ENCODE measurements at regions of chr10 and their contacts with region 1.

Region 1: GRCh38 chr10:95693668-95694534 is at the start of gene TCTN3:
- DNase-seq: peak; percentile 96 to 98
- ATAC-seq: peak; percentile 99
- total RNA-seq, gene TCTN3: 26.6 to 29.6 TPM

Region 2: GRCh38 chr10:95618126-95618525 is 75.8 kb before region 1 on chr10:
- intact Hi-C with region 1: no loop called
- DNase-seq: no peak
- ATAC-seq: no peak

Region 3: DNA sequence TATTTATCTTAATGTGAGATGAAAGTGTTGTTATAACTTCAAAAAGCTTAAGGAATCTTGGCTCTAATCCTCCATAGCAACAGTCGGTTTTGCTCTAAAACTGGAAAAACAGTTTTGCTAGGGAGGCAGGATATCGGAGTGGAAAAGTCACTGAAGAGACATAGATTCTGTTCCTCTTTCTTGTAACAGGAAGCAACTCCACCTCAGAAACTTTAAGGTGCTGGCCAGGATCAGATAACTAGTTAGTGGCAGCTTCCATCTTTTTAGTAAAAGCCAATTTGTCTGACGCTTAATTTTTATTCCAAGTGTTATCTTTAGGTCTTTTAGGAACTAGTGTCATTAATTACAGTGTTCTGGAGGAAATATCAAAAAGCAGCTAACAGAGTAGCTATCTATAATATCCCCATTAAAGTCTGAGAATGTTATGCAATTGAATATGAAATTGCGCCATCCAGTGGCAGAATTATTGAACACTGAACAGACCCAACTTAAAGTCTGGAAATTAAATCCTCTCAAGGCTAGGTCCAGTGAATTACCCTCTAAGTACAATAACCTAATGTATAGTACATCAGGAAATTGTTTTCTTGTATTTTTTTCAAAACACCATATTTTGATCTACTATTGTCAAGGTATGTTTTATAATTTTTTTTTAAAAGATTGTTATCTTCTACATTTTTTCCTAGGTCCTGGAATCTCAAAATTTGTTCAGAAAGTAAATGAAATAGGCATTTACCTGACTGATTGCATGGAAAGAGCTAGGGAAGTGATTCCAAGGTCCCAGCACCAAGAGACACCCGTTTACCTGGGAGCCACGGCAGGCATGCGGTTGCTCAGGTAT is 148.0 kb after region 1 on chr10:
- intact Hi-C with region 1: loop called in 1 of 2 experiments (anchors 5 kb)
- DNase-seq: peak in 1 of 2 donors; percentile 64
- ATAC-seq: peak; percentile 79

Measured in left colon (tissue), 2 donors.